ENCODE measurements at regions of chr22 and their contacts with region 1.

Region 1: GRCh38 chr22:37792494-37792893 is 15.2 kb upstream of the GCAT start:
- DNase-seq: no peak
- ATAC-seq: no peak
- H3K4me3 ChIP-seq: no peak overlapping the region
- H3K27ac ChIP-seq: no peak overlapping the region
- H3K4me1 ChIP-seq: no peaks in the 10 kb centered on the region
- H3K27me3 ChIP-seq: no peaks in the 10 kb centered on the region
- CTCF ChIP-seq: no peak
- POLR2A ChIP-seq: no peak
- RAD21 ChIP-seq: no peak

Region 2: GRCh38 chr22:37658133-37659065 is 134.1 kb before region 1 on chr22 and contains the start of gene PDXP:
- CTCF ChIA-PET with region 1: no interaction called
- POLR2A ChIA-PET with region 1: no interaction called
- dilution Hi-C with region 1: no loop called
- in situ Hi-C with region 1: no loop called
- intact Hi-C with region 1: loop called (anchors 1 kb)
- DNase-seq: peak; percentile 100
- ATAC-seq: peak; percentile 95
- H3K4me3 ChIP-seq: peak within 1 kb of the TSS; percentile 55
- H3K27ac ChIP-seq: peak within 1 kb of the TSS; percentile 74
- H3K4me1 ChIP-seq: peaks cover 22% of the 10 kb centered on the region
- H3K27me3 ChIP-seq: no peaks in the 10 kb centered on the region
- CTCF ChIP-seq: no peak
- POLR2A ChIP-seq: peak; percentile 48; the same call in 1 of the 2 replicates
- RAD21 ChIP-seq: no peak; the same call in 1 of the 2 replicates
- total RNA-seq, gene PDXP: 5.4 and 5.6 TPM in 2 replicates

Region 3: DNA sequence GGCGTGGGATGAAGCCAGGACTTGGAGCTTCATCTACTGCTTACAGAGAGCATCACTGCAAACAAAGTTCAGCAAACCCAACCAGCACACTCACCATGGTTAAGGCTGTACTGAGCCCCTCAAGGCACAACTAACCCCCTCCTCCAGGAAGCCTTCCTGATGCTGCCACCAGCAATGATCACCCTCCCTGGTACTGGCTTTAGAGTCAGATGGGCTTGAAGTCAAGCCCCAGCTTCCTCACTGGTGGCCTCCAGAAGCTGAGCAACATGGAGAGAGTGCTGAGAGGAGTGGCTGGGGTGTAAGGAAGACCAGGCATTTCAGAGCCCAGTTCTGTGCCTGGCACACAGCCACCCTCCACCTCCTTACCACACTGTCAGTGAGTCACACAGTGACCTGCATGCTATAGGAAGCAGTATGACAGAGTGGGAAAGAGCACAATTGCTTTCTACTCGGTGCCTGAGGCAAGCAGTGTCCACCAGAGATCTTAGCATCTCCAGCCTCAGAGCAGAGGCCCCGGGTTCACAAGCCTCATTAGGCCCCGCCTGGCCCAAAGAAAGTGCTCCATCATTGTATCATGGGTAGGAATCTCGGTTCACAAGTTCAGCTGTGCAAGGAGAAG is 342.7 kb after region 1 on chr22:
- CTCF ChIA-PET with region 1: no interaction called
- POLR2A ChIA-PET with region 1: no interaction called
- dilution Hi-C with region 1: no loop called
- in situ Hi-C with region 1: no loop called
- intact Hi-C with region 1: no loop called
- DNase-seq: peak; percentile 90
- ATAC-seq: peak; percentile 90
- H3K4me3 ChIP-seq: no peak overlapping the region
- H3K27ac ChIP-seq: no peak overlapping the region
- H3K4me1 ChIP-seq: peaks cover 2% of the 10 kb centered on the region
- H3K27me3 ChIP-seq: no peaks in the 10 kb centered on the region
- CTCF ChIP-seq: no peak
- POLR2A ChIP-seq: no peak
- RAD21 ChIP-seq: no peak